ENCODE measurements at regions of chr17 and their contacts with region 1.

Region 1: GRCh38 chr17:12034538-12034937 is 13.9 kb downstream of the MAP2K4 start:
- DNase-seq: no peak
- ATAC-seq: no peak
- H3K4me3 ChIP-seq: no peak overlapping the region
- H3K4me3 Mint-ChIP-seq: peak overlapping the region in 1 of 10 donors; percentile 30
- H3K27ac ChIP-seq: no peak overlapping the region
- H3K27ac Mint-ChIP-seq: no peak overlapping the region
- H3K4me1 ChIP-seq: no peaks in the 10 kb centered on the region
- H3K4me1 Mint-ChIP-seq: peaks cover 10 to 76% (median 59%) of the 10 kb centered on the region in 7 donors
- H3K27me3 ChIP-seq: no peaks in the 10 kb centered on the region
- H3K27me3 Mint-ChIP-seq: no peaks in the 10 kb centered on the region

Region 2: DNA sequence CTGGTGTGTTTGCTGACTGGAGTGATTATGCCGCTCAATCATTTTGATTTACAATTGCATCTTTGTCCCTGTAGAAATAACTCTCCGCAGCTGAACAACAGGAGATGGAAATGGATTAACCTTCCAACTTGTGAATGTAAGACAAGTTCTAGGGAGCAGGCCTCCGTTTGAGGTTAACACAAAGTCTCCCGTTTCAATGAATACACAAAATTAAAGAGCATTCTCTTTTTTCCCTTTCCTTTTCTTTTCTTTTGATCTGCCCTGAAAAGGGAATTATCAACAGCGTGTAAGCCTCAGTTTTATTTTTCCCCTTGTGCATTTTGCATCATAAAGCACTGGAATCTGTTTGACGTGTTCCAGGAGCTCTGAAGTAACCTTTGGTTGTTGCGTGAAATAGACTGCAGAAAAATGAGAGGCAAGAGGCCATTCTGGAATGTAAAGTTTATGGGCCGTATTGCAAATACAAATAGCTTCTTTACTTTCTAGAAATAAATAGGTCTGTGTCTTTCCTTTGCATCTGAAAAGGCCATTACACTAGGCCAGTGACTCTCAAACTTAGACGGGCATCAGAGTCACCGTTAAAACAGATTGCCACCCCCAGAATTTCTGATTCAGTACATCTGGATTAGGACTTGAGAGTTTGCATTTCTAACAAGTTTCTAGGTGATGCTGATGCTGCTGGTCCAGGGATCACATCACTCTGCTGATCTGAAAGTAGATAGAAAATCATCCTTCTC is 202.0 kb before region 1 on chr17:
- CTCF ChIA-PET with region 1: no interaction called
- POLR2A ChIA-PET with region 1: no interaction called
- intact Hi-C with region 1: no loop called
- DNase-seq: no peak
- ATAC-seq: no peak
- H3K4me3 ChIP-seq: no peak overlapping the region
- H3K4me3 Mint-ChIP-seq: no peak overlapping the region
- H3K27ac ChIP-seq: no peak overlapping the region
- H3K27ac Mint-ChIP-seq: no peak overlapping the region
- H3K4me1 ChIP-seq: no peaks in the 10 kb centered on the region
- H3K4me1 Mint-ChIP-seq: no peaks in the 10 kb centered on the region
- H3K27me3 ChIP-seq: no peaks in the 10 kb centered on the region
- H3K27me3 Mint-ChIP-seq: peaks cover 0 to 23% (median 4%) of the 10 kb centered on the region in 5 donors

Region 3: DNA sequence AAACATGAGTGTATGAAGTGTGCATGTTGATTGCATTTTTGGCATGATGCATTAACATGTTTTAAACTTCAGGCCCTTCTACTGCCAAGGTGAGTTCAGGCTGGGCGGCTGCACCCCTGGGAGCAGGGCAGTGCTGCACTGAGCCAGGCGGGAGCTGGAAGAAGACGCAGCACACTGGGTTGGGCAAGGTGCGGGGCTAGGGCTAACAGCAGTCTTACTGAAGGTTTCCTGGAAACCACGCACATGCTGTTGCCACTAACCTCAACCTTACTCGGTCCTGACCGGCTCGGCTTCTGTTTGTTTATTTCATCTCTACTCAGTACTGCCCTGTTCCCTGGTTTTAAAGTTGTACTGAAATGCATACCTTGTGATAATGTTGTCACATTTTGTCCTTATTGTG is 47.2 kb after region 1 on chr17:
- CTCF ChIA-PET with region 1: no interaction called
- POLR2A ChIA-PET with region 1: no interaction called
- intact Hi-C with region 1: loop called in 1 of 2 experiments (anchors 5 kb)
- DNase-seq: no peak
- ATAC-seq: no peak
- H3K4me3 ChIP-seq: no peak overlapping the region
- H3K4me3 Mint-ChIP-seq: no peak overlapping the region
- H3K27ac ChIP-seq: no peak overlapping the region
- H3K27ac Mint-ChIP-seq: peak overlapping the region in 2 of 9 donors; percentile 26 to 52
- H3K4me1 ChIP-seq: no peaks in the 10 kb centered on the region
- H3K4me1 Mint-ChIP-seq: peaks cover 10 to 51% (median 27%) of the 10 kb centered on the region in 7 donors
- H3K27me3 ChIP-seq: no peaks in the 10 kb centered on the region
- H3K27me3 Mint-ChIP-seq: no peaks in the 10 kb centered on the region

Measured in naive thymus-derived CD4-positive, alpha-beta T cell (primary cell).